ENCODE measurements at regions of chr11 and their contacts with region 1.

Region 1: DNA sequence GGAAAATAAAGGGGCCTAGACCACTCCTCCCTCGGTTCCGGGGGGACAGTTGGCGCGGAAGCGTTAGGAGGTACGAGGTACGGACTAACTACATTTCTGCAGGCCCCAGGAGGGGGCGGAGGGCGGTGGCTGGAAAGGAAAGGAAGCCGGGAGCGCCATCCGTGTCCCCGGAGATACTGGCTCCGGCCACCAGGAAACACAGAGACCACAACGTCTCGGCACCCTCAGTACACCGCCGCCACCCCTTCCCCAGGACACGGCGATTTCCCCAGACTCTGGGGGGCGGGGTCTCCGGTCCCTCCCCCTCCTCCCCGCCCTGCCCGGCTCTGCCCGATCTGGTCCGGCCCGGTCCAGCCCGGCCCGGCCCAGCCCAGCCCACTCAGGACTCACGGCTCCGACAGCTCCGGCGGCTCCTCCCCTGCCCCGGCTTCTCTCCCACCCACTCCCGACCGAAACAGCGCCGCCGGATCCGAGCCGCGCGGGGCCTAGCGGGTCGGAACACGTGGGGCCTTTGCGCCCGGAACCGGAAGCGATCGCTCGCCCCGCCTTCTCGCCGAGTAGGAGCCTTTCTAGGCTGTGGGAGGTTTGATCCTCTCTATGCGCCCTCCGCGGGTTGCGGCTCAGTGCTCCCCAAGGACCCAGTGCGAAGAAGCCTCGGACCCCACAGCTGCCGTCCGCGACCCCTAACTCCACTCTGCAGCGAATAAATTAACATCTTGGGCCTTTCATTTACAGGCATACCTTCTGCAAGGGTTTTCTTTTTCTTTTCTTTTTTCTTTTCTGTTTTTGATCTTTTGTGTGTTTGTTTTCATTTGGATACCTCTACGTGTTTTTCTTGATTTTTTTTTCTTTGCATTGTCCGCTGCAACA is at the start of gene ZNF202:
- DNase-seq: peak; percentile 93
- ATAC-seq: peak; percentile 90
- H3K4me3 ChIP-seq: peak within 1 kb of the TSS; percentile 73 to 96 (median 82)
- H3K4me3 Mint-ChIP-seq: peak within 1 kb of the TSS; percentile 98
- H3K27ac ChIP-seq: peak within 1 kb of the TSS; percentile 59 to 84
- H3K27ac Mint-ChIP-seq: peak within 1 kb of the TSS; percentile 96
- H3K4me1 ChIP-seq: peaks cover 20 to 21% of the 10 kb centered on the region in 2 donors
- H3K4me1 Mint-ChIP-seq: peaks cover 37% of the 10 kb centered on the region
- H3K27me3 ChIP-seq: peaks cover 0 to 7% (median 0%) of the 10 kb centered on the region in 4 experiments
- H3K27me3 Mint-ChIP-seq: peaks cover 9% of the 10 kb centered on the region
- CTCF ChIP-seq: no peak
- total RNA-seq, gene ZNF202: 25.1 and 32.3 TPM in 2 replicates

Region 2: DNA sequence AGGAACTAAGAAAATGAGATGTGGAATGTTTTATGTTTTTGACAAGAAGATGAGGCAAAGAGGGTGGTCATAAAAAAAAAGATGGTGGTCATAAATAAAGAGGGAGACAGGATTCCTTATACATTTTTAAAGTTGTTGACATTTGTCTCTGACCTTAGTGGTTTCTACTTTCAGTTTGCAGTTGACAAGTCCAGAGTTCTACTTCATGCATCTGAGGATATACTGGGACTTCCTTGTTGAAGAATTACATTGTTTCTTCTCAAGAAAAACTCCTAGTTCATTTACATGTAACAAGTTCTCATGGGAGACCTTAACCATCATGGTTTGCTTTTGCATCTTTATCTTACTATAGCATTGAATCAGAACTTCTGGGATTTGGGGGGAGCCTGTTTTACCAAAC is 11.7 kb after region 1 on chr11:
- CTCF ChIA-PET with region 1: no interaction called
- POLR2A ChIA-PET with region 1: no interaction called
- intact Hi-C with region 1: no loop called
- DNase-seq: no peak
- ATAC-seq: no peak
- H3K4me3 ChIP-seq: no peak overlapping the region
- H3K4me3 Mint-ChIP-seq: no peak overlapping the region
- H3K27ac ChIP-seq: no peak overlapping the region
- H3K27ac Mint-ChIP-seq: no peak overlapping the region
- H3K4me1 ChIP-seq: no peaks in the 10 kb centered on the region
- H3K4me1 Mint-ChIP-seq: peaks cover 6% of the 10 kb centered on the region
- H3K27me3 ChIP-seq: peaks cover 0 to 10% (median 5%) of the 10 kb centered on the region in 4 experiments
- H3K27me3 Mint-ChIP-seq: peaks cover 39% of the 10 kb centered on the region
- CTCF ChIP-seq: no peak

Region 3: DNA sequence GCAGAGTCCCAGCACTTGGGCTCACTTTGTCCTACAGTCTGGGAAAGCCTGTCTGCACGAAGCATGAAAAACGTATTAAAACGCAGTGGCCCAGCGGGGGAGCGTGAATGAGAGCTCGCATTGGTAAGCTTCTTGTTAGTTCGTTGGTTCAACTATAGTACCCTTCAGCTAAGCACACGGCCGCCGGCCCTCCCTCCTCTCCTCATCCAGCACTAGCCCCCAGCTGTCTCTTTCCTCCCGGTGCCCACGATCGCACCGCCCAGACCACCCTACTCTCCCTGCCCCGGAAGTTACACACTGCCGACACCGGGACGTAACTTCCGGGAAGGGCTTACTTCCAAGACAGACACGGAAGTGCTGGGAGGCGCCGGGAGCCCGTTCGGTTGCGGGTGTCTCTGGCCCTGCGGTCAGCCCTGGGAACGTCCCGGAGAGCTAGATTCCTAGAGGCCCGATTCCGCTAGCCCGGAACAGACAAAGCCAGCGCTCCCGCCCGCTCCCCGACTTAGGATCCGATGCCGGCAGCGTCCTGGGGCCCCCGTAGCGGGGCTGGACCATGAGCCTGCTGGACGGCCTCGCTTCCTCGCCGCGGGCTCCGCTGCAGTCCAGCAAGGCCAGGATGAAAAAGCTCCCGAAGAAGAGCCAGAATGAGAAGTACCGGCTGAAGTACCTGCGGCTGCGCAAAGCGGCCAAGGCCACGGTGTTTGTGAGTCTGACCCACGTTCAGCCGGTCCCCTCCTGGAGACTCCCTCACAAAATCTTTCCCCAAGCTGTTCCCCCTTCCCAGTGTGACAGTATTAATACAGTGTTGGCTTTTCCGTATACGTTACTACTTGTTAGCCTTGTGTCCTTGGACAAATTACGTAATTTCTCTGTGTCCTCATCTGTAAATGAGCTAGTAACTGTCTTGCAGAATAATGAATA is 881.4 kb after region 1 on chr11 and contains the start of gene TBRG1:
- CTCF ChIA-PET with region 1: interaction called, 3 read pairs
- POLR2A ChIA-PET with region 1: no interaction called
- intact Hi-C with region 1: loop called (anchors 5 kb)
- DNase-seq: peak; percentile 89
- ATAC-seq: peak; percentile 97
- H3K4me3 ChIP-seq: peak within 1 kb of the TSS; percentile 75 to 98 (median 91)
- H3K4me3 Mint-ChIP-seq: peak within 1 kb of the TSS; percentile 99
- H3K27ac ChIP-seq: peak within 1 kb of the TSS; percentile 71 to 95
- H3K27ac Mint-ChIP-seq: peak within 1 kb of the TSS; percentile 97
- H3K4me1 ChIP-seq: peaks cover 15 to 17% of the 10 kb centered on the region in 2 donors
- H3K4me1 Mint-ChIP-seq: peaks cover 31% of the 10 kb centered on the region
- H3K27me3 ChIP-seq: peaks cover 0 to 13% (median 3%) of the 10 kb centered on the region in 4 experiments
- H3K27me3 Mint-ChIP-seq: peaks cover 24% of the 10 kb centered on the region
- CTCF ChIP-seq: no peak
- total RNA-seq, gene TBRG1: 66.8 and 71.5 TPM in 2 replicates